Motor neuron (in vitro differentiated cells): ENCODE measurements at regions of chr11 and their contacts with region 1.

Region 1: DNA sequence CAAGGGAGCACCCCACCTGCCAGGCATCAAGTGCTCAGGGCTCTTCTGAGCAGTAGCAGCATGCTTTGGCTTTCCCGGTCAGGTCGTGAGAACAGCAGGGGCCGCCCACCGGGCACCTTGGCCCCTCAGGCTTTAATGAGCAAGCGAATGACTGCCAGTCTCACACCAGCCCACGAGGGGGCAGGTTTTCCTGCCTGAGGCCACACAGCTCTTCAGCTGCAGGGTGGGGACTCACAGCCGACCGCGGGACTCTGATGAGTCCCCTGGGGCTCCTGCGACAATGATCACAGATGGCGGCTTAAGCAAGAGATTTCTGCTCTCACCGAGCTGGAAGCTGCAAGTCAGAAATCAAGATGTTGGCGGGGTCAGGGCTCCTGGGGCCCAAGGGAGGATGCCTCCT is 14.3 kb upstream of the FGF19 start:
- ATAC-seq: peak; percentile 82 to 98 (median 95)
- H3K4me3 ChIP-seq: no peak overlapping the region
- H3K27ac ChIP-seq: no peak overlapping the region
- H3K4me1 ChIP-seq: peaks cover 12 to 17% of the 10 kb centered on the region in 2 donors

Region 2: GRCh38 chr11:69867738-69868493 is 149.8 kb after region 1 on chr11:
- in situ Hi-C with region 1: loop called in 1 of 9 experiments (anchors 25 kb)
- ATAC-seq: peak in 4 of 8 experiments; percentile 8 to 35 (median 16)
- H3K4me3 ChIP-seq: no peak overlapping the region
- H3K27ac ChIP-seq: no peak overlapping the region
- H3K4me1 ChIP-seq: peaks cover 24 to 37% of the 10 kb centered on the region in 2 donors

Region 3: DNA sequence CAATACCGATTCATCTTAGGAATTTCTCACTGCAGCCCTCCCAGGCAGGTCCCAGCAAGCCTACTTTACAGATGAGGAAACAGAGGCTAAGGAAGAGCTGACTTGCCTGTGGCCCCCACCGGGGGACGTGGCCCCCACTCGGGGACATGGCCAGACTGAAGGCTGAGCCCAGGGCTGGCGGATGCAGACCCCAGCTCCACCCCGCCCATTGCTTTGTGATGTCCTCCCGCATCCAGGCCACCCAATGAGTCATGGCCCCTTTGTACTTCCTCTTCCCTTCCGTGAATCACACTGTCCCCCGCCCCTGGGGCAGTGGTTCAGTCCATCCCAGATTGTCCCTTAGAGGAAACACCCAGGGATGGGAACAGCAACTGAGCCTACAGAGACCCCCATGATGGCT is 244.0 kb after region 1 on chr11:
- in situ Hi-C with region 1: no loop called
- ATAC-seq: peak in 7 of 8 experiments; percentile 15 to 88 (median 50)
- H3K4me3 ChIP-seq: no peak overlapping the region
- H3K27ac ChIP-seq: no peak overlapping the region
- H3K4me1 ChIP-seq: peaks cover 14 to 20% of the 10 kb centered on the region in 2 donors